Gastrocnemius medialis (tissue), 4 donors: ENCODE measurements at regions of chr5 and their contacts with region 1.

Region 1: GRCh38 chr5:151454166-151454565 is 6.8 kb downstream of the SLC36A1 start:
- DNase-seq: peak; percentile 77 to 86
- ATAC-seq: peak; percentile 93 to 97
- H3K4me3 ChIP-seq: no peak overlapping the region
- H3K27ac ChIP-seq: peak overlapping the region; percentile 83 to 90 (median 88)
- H3K4me1 ChIP-seq: peaks cover 44 to 48% of the 10 kb centered on the region in 2 donors
- H3K27me3 ChIP-seq: no peaks in the 10 kb centered on the region
- CTCF ChIP-seq: no peak
- POLR2A ChIP-seq: peak in 1 of 2 donors; percentile 20

Region 2: DNA sequence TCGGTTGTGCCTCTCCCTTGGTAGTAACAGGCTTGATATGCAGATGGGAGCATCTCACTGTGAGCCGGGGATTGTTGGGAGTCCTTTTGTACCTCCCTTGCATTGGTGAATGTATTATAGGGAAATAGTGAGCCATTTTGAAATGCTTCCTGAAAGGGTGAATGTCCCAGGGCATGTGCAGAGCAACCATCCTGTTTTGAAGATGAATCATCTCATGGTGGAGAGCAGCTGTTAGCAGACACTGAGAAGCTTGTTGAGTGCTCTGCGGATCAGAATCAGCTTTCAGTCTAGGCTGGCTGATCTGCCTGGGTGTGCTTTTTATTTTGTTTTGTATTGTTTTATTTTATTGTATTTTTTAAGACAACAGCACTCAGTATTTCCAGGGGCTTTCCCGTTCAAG is 22.9 kb after region 1 on chr5:
- in situ Hi-C with region 1: no loop called
- intact Hi-C with region 1: loop called (anchors 2 kb)
- DNase-seq: peak in 1 of 2 donors; percentile 18
- ATAC-seq: peak; percentile 77 to 80
- H3K4me3 ChIP-seq: no peak overlapping the region
- H3K27ac ChIP-seq: peak overlapping the region in 3 of 4 donors; percentile 70 to 79 (median 73)
- H3K4me1 ChIP-seq: peaks cover 12 to 47% of the 10 kb centered on the region in 2 donors
- H3K27me3 ChIP-seq: no peaks in the 10 kb centered on the region
- CTCF ChIP-seq: no peak
- POLR2A ChIP-seq: no peak